ENCODE measurements at regions of chr1 and their contacts with region 1.

Region 1: GRCh38 chr1:225652729-225653462 is at the start of gene ENAH:
- DNase-seq: peak in 1 of 2 experiments; percentile 83
- H3K4me3 ChIP-seq: peak within 1 kb of the TSS; percentile 94 to 100 (median 96)
- H3K27ac ChIP-seq: peak within 1 kb of the TSS; percentile 93
- H3K4me1 ChIP-seq: peaks cover 0 to 3% (median 0%) of the 10 kb centered on the region in 4 experiments; a peak in 2 of 7 replicates
- H3K27me3 ChIP-seq: no peaks in the 10 kb centered on the region
- CTCF ChIP-seq: no peak
- EP300 ChIP-seq: peak in 1 of 2 experiments; percentile 67; a peak in 1 of 3 replicates
- POLR2A ChIP-seq: peak in 1 of 2 experiments; percentile 84; a peak in 2 of 3 replicates
- RAD21 ChIP-seq: no peak
- total RNA-seq, gene ENAH: 318 and 335 TPM in 2 replicates

Region 2: DNA sequence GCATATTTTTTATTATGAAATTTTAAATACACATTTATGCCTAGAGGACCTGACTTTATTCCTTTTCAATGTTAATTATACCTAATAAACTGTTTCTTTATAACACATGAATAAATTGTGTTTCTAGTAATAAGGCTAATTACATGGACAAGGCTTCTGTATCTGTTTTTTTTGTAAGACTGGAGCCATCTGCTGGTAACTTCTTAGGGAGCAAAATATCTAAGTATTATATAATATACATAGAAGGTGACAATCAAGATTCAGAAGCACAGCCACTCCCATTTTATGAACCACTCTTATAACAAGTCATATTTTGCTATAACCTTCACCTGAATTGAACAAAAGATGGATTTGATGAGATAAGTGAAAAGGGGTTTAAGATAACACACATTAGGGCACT is 309.3 kb before region 1 on chr1:
- CTCF ChIA-PET with region 1: no interaction called
- POLR2A ChIA-PET with region 1: no interaction called
- DNase-seq: no peak
- H3K4me3 ChIP-seq: no peak overlapping the region
- H3K27ac ChIP-seq: no peak overlapping the region
- H3K4me1 ChIP-seq: no peaks in the 10 kb centered on the region
- H3K27me3 ChIP-seq: no peaks in the 10 kb centered on the region
- CTCF ChIP-seq: no peak
- EP300 ChIP-seq: no peak
- POLR2A ChIP-seq: no peak
- RAD21 ChIP-seq: peak in 1 of 2 experiments; percentile 7; a peak in 1 of 4 replicates

Region 3: DNA sequence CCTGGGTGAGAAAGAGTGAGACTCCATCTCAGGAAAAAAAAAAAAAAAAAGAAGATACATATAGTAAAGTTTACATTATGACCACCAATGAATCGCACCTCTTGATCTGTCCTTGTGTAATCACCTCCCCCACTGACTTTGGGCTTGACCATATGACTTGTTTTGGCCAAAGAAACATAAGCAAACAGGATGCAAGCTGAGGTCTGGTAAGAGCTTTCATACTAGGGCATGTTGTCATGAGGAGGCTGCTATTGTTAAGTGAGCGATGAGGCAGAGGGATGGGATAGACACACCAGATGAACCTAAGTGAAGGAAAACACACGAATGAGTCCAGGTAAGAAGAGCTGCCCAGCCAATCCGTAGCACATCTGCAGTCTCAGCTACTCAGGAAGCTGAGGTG is 10.7 kb before region 1 on chr1:
- CTCF ChIA-PET with region 1: interaction called, 5 read pairs
- POLR2A ChIA-PET with region 1: interaction called, 22 read pairs
- DNase-seq: no peak
- H3K4me3 ChIP-seq: no peak overlapping the region
- H3K27ac ChIP-seq: no peak overlapping the region; the same call in 1 of the 2 replicates
- H3K4me1 ChIP-seq: peaks cover 0 to 3% (median 0%) of the 10 kb centered on the region in 4 experiments; a peak in 1 of 7 replicates
- H3K27me3 ChIP-seq: no peaks in the 10 kb centered on the region
- CTCF ChIP-seq: no peak
- EP300 ChIP-seq: no peak
- POLR2A ChIP-seq: no peak
- RAD21 ChIP-seq: no peak

Region 4: DNA sequence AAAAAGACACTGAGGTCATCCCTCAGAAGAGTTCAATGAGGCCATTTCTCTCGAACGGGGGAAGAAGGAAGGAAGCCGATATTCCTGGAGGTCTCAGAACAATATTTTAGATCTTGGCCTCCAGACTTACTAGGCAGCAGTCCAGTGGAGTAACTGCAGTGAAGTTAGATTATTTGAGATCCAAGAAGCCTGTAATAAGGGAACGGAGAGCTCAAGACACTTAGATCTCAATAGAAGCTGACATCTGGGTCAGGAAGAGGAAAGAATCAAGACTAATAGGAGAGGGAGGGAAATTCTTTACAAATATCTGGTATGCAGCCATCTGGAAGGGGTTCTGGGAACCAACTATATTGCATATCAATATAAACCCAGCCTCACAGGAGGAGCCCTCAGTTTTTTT is 13.6 kb after region 1 on chr1:
- CTCF ChIA-PET with region 1: interaction called, 21 read pairs
- POLR2A ChIA-PET with region 1: interaction called, 21 read pairs
- DNase-seq: no peak
- H3K4me3 ChIP-seq: no peak overlapping the region
- H3K27ac ChIP-seq: no peak overlapping the region
- H3K4me1 ChIP-seq: no peaks in the 10 kb centered on the region
- H3K27me3 ChIP-seq: no peaks in the 10 kb centered on the region
- CTCF ChIP-seq: no peak
- EP300 ChIP-seq: no peak
- POLR2A ChIP-seq: no peak
- RAD21 ChIP-seq: no peak

Region 5: GRCh38 chr1:225817611-225818061 is 164.7 kb after region 1 on chr1:
- CTCF ChIA-PET with region 1: no interaction called
- POLR2A ChIA-PET with region 1: no interaction called
- DNase-seq: no peak
- H3K4me3 ChIP-seq: no peak overlapping the region
- H3K27ac ChIP-seq: peak overlapping the region; percentile 40; the same call in 1 of the 2 replicates
- H3K4me1 ChIP-seq: peaks cover 11 to 35% (median 24%) of the 10 kb centered on the region in 4 experiments
- H3K27me3 ChIP-seq: no peaks in the 10 kb centered on the region
- CTCF ChIP-seq: no peak
- EP300 ChIP-seq: no peak
- POLR2A ChIP-seq: no peak
- RAD21 ChIP-seq: no peak

Region 6: DNA sequence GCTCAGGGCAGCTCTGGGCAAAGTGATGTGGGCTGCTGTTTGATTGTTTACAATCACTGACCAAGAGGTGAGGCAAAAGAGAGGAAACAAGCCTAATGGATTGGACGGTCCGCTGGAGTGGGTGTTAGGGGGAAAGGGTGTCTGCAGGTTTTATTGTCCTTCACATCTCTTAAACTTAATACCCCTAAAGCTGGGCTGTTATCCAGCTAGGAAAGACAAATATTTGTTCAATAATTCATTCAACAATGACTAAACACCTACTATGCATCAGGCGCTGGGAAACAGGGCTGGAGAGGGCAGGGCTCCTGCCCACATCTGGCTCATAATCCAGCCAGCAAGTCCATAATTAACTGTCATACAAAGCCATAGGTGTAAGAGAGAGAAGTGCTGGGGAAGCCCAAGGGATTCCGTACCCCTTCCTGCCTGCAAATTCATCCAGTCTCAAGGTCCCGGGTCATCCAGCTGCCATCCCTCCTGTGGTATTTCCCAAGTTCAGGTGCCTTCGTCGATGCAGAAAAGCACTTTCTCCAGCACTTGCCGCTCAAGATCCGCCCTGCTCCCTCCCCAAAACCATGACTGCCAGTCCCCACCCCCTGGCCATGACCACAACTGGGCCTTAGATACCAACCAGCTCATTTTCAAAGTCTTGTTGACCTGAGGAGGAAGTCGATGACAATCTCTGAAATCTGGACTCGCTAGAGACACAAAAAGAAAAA is 218.6 kb after region 1 on chr1:
- CTCF ChIA-PET with region 1: no interaction called
- POLR2A ChIA-PET with region 1: no interaction called
- DNase-seq: no peak
- H3K4me3 ChIP-seq: no peak overlapping the region
- H3K27ac ChIP-seq: no peak overlapping the region
- H3K4me1 ChIP-seq: peaks cover 0 to 3% (median 0%) of the 10 kb centered on the region in 4 experiments; a peak in 2 of 7 replicates
- H3K27me3 ChIP-seq: no peaks in the 10 kb centered on the region
- CTCF ChIP-seq: no peak
- EP300 ChIP-seq: no peak
- POLR2A ChIP-seq: no peak
- RAD21 ChIP-seq: no peak

Measured in H1 (cell line).